Gastrocnemius medialis (tissue), 4 donors: ENCODE measurements at regions of chr14 and their contacts with region 1.

Region 1: GRCh38 chr14:34331728-34332623 is 130.1 kb downstream of the SPTSSA start:
- DNase-seq: peak; percentile 20 to 42
- ATAC-seq: peak; percentile 58 to 87
- H3K4me3 ChIP-seq: no peak overlapping the region
- H3K27ac ChIP-seq: no peak overlapping the region
- H3K4me1 ChIP-seq: peaks cover 0 to 5% of the 10 kb centered on the region in 2 donors
- H3K27me3 ChIP-seq: no peaks in the 10 kb centered on the region
- CTCF ChIP-seq: peak; percentile 67 to 87 (median 73)
- POLR2A ChIP-seq: no peak

Region 2: DNA sequence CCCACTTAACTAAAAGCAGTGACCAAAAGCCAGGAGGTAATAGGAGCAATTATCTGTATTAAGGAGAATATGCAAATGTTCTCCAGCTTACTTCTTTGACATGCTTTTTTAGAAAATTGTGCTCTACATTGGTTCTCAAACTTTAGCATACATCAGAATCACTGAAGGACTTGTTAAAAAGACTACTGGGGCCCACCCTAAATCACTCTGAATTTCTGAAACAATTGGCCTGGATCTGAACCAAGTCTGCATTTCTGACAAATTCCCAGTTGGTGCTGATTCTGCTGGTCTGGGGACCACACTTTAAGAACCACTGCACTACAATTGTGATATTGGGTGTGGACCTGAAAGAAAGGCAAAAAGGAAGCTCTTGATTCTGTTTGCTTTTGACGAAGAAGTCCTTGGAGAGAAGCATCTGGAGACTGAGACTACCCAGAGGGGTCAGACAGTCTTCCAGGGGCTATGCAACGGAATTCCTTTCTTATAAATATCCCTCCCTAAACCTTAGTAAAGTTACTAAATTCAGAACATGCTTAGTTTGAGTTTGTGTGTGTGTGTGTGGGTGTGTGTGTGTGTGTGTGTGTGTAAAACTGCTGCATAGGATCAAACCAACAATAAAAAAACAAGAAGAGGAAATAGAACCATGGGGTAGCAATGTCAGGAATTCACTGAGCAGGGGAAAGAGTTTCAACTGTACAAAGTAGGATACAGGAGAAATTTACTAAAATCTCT is 170.7 kb after region 1 on chr14:
- in situ Hi-C with region 1: loop called (anchors 10 to 25 kb)
- intact Hi-C with region 1: loop called (anchors 1 kb)
- DNase-seq: no peak
- ATAC-seq: no peak
- H3K4me3 ChIP-seq: no peak overlapping the region
- H3K27ac ChIP-seq: no peak overlapping the region
- H3K4me1 ChIP-seq: peaks cover 2% of the 10 kb centered on the region in 2 donors
- H3K27me3 ChIP-seq: no peaks in the 10 kb centered on the region
- CTCF ChIP-seq: no peak
- POLR2A ChIP-seq: no peak